ENCODE measurements at regions of chr5 and their contacts with region 1.

Region 1: DNA sequence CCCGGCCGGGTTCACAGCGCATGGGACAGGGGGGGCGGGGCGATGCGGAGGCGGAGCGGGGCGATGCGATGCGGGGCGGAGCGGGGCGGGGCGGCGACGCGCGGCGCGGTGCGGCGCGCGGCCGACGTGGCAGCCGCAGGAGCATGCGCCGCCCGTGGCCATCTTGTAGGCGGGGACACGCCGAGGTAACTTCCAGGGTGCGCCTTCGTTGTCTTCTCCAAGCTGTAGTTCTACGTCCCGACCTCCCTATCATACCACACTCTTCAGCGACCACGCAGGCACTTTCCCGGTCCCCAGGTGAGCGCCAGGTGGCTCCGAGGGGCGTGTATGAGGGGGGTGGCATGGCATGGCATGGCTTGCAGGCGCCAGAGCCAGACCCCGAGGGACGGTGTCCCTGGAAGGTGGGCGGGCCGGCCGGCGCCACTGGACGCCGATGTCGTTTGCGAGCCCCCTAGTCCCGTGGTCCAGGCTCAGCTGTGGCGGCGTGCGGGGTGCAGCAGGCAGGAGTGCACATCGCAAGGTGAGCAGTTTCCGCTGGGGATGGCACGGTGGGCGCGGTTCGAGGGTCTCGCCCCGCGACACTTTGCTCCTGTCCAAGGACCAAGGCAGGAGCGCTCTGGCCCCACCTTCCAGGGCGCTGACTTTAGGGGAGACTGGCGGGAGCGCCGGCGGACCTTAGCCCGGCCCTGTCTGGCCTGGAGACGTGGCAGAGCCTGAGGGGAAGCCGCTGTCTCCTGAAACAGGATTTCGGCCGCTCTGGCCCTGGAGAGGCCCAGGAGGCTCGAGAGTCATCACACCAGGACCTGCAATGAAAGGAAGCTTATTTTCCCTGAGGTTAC is at the start of gene PRRC1:
- DNase-seq: peak; percentile 73
- H3K4me3 Mint-ChIP-seq: peak within 1 kb of the TSS; percentile 85
- H3K27ac Mint-ChIP-seq: peak within 1 kb of the TSS; percentile 75
- H3K4me1 Mint-ChIP-seq: peaks cover 23% of the 10 kb centered on the region
- H3K27me3 Mint-ChIP-seq: peaks cover 11% of the 10 kb centered on the region
- total RNA-seq, gene PRRC1: 53.5 and 56.9 TPM in 2 replicates

Region 2: GRCh38 chr5:127072861-127073846 is 444.5 kb before region 1 on chr5 and contains the start of gene C5orf63:
- intact Hi-C with region 1: loop called (anchors 10 kb)
- DNase-seq: peak; percentile 68
- H3K4me3 Mint-ChIP-seq: peak within 1 kb of the TSS; percentile 94
- H3K27ac Mint-ChIP-seq: peak within 1 kb of the TSS; percentile 91
- H3K4me1 Mint-ChIP-seq: peaks cover 22% of the 10 kb centered on the region
- H3K27me3 Mint-ChIP-seq: no peaks in the 10 kb centered on the region
- total RNA-seq, gene C5orf63: 6.1 and 6.4 TPM in 2 replicates

Region 3: DNA sequence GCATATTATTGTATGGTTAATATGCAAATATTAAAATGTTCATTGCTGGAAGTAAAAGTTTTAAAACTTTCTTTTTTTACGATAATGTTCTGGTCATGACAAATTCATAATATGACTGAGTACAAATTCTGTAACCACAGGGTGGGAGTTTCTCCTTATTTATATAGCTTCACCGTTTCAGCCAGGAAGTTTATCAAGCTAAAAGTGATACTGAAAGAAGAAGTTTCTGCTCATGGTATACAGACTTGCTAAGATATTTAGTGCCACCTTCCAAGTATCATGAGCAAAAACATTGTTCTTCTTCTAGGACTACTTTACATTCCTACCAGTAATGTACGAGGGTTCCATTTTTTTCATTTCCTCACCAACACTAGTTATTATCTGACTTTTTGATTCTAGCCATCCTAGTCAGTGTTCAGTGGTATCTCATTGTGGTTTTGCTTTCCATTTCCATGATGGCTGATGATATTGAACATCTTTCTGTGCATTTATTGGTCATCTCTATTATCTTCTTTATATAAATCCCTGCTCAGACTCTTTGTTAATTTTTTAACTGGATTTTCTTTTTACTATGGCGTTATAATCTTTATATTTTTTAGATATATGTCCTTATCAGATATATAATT is 94.4 kb before region 1 on chr5:
- intact Hi-C with region 1: no loop called
- DNase-seq: no peak
- H3K4me3 Mint-ChIP-seq: no peak overlapping the region
- H3K27ac Mint-ChIP-seq: no peak overlapping the region
- H3K4me1 Mint-ChIP-seq: peaks cover 3% of the 10 kb centered on the region
- H3K27me3 Mint-ChIP-seq: peaks cover 5% of the 10 kb centered on the region

Region 4: DNA sequence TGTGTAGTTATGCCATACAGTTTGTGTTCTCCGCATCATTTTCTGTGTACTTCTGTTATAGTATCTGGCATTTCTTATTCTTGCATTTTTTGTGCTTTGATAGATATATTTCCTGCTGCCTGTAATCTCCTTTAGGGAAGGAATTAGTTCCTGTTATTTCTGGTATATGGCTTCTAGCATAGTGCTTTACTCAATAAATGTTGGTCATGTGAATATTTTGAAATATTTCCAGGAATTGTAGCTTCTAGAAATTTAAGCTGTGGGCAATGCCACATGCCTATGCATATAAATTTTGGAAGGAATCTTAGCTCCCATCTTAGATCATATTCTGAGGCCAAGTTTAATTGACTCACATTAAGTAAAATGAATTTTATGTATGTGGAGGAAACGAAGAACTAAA is 11.8 kb before region 1 on chr5:
- intact Hi-C with region 1: no loop called
- DNase-seq: no peak
- H3K4me3 Mint-ChIP-seq: no peak overlapping the region
- H3K27ac Mint-ChIP-seq: no peak overlapping the region
- H3K4me1 Mint-ChIP-seq: no peaks in the 10 kb centered on the region
- H3K27me3 Mint-ChIP-seq: peaks cover 38% of the 10 kb centered on the region

Measured in activated T-helper 2 cell treated with anti-CD3 and anti-CD28 coated beads, Interferon-gamma antibody, Interleukin-2, Interleukin-4, amounts not matched to agents 10 μg/mL and 5 μg/mL and 100 μg/mL, durations not matched to agents 14 hours and 24 hours and 36 hours (primary cell).